ENCODE measurements at regions of chr17 and their contacts with region 1.

Region 1: DNA sequence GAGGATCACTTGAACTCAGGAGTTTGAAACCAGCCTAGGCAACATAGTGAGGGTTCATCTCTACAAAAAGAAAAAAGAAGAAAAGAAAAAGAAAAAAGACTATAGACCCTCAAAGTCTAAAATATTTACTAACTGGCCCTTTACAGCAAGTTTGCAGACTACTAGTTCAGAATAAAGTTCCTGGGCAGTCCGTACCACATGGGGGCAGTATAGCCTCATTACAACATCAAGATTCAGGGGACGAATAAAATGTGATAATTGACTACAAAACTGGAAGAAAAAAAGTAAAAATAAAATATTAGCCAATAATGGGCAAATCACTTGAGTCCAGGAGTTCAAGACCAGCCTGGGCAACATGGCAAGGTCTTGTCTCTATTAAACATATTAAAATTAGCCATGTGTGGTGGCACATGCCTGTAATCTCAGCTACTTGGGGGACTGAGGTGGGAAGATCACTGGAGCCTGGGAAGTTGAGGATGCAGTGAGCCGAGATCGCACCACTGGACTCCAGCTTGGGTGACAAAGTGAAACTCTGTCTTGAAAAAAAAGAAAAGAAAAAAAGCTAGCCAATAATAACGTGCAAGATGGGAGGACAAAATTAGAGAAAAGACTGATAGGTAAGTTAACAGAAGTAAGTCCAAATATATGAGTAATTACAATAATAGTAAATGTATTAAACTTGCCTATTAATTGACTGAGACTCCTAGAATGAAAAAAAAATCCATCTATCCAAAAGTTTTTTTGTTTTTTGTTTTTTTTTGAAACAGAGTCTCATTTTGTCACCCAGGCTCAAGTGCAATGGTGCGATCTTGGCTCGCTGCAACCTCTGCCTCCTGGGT is 129.4 kb upstream of the SEC14L1 start:
- DNase-seq: peak; percentile 85
- H3K4me3 ChIP-seq: no peak overlapping the region
- H3K27ac ChIP-seq: no peak overlapping the region
- H3K4me1 ChIP-seq: peaks cover 12% of the 10 kb centered on the region
- CTCF ChIP-seq: peak; percentile 100

Region 2: GRCh38 chr17:76868176-76868668 is 143.2 kb before region 1 on chr17 and contains the start of gene MGAT5B:
- CTCF ChIA-PET with region 1: no interaction called
- POLR2A ChIA-PET with region 1: no interaction called
- intact Hi-C with region 1: loop called (anchors 1 kb)
- DNase-seq: peak; percentile 94
- H3K4me3 ChIP-seq: peak within 1 kb of the TSS; percentile 58
- H3K27ac ChIP-seq: no peak within 1 kb of the TSS
- H3K4me1 ChIP-seq: peaks cover 21% of the 10 kb centered on the region
- CTCF ChIP-seq: peak; percentile 85
- total RNA-seq, gene MGAT5B: 1.3 and 2.5 TPM in 2 replicates

Region 3: DNA sequence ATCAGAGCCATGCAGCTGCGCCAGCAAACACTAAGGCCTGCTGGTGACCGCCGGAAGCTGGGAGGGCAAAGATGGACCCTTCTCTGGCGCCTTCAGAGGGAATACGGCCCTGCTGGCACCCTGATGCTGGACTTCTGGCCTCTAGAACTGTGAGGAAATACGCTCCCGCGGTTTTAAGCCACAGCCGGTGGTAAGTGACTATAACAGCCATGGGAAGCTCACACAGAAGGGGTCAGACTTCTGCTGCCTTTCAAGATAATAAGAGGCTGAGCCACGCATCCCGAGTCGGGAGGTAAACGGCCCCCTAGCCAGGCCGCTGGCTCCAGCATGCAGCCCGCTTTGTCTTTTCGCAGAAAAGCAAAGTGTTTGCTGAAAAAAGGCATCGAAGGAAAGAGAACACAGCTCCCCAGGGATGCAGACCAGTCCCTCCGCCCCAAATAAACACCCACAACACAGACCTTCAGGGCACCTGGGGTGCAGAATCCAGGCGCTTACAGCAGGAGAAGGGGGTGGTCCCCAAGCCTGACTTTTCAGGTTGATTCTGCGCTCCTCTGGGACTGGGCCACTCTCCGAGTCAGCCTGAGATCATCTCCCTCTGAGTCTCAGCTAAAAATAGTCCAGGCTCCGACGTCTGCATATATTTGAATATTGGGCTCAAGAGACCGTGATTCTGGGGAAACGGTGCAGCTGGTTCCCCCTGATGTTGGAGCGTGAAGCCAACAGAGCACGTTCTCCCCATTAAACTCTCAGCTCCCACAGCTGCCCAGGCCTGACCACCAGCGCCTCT is 53.5 kb before region 1 on chr17:
- CTCF ChIA-PET with region 1: interaction called, 5 read pairs
- POLR2A ChIA-PET with region 1: interaction called, 3 read pairs
- intact Hi-C with region 1: loop called (anchors 2 kb)
- DNase-seq: peak; percentile 89
- H3K4me3 ChIP-seq: peak overlapping the region; percentile 61
- H3K27ac ChIP-seq: peak overlapping the region; percentile 58
- H3K4me1 ChIP-seq: peaks cover 29% of the 10 kb centered on the region
- CTCF ChIP-seq: 0 out of 2 replicates have a peak, but pooled peaks have one; percentile 8

Region 4: DNA sequence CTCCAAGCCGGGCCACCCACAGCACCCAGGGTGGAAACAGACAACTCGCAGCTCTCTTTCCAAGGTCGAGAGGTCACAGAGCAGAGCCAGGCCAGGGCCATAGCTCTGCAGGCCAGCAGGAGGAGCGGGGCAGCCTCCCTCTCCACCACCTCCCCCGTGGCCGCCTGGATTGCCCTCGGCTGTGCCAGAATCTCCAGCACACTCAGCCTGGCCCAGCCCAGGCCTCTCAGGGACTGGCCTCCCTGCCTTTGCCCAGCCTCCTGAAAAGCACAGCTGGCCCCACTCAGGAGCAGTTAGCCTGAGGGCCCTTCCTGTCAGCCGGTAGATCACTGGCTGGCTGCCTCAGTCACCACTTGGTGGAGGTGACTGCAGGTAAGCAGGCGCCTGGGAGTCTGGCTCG is 43.5 kb after region 1 on chr17:
- CTCF ChIA-PET with region 1: no interaction called
- POLR2A ChIA-PET with region 1: interaction called, 5 read pairs
- intact Hi-C with region 1: loop called (anchors 1 kb)
- DNase-seq: no peak
- H3K4me3 ChIP-seq: no peak overlapping the region
- H3K27ac ChIP-seq: no peak overlapping the region
- H3K4me1 ChIP-seq: peaks cover 6% of the 10 kb centered on the region
- CTCF ChIP-seq: no peak

Region 5: GRCh38 chr17:77068915-77069314 is 57.5 kb after region 1 on chr17:
- CTCF ChIA-PET with region 1: no interaction called
- POLR2A ChIA-PET with region 1: no interaction called
- intact Hi-C with region 1: loop called (anchors 2 kb)
- DNase-seq: no peak
- H3K4me3 ChIP-seq: no peak overlapping the region
- H3K27ac ChIP-seq: no peak overlapping the region
- H3K4me1 ChIP-seq: no peaks in the 10 kb centered on the region
- CTCF ChIP-seq: no peak

Region 6: DNA sequence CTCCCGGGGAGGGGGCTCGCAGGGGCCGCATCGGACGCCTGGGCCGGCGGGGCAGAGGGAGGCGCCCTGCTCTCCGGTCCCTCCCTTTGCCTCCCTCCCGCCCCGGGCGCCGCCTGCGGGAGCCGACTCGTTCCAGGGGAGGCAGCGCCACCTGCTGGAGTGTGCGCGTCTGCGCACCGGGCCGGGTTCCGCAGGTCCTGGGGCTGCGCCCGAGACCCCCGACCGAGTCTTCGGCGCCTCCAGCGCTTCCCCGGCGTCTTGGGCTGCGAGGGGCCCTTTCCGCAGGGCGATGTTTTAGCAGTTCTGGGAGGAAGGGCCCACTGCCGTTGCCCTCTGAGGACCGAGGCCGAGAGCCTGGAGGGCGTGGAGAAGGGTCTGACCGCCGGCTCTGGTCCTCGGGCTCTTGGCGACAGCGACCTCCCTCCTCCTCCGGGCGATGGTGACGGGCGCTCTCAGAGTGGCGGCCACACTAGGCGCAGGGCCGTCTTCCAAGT is 235.7 kb after region 1 on chr17:
- CTCF ChIA-PET with region 1: no interaction called
- POLR2A ChIA-PET with region 1: no interaction called
- intact Hi-C with region 1: loop called (anchors 1 kb)
- DNase-seq: peak; percentile 91
- H3K4me3 ChIP-seq: peak overlapping the region; percentile 61
- H3K27ac ChIP-seq: no peak overlapping the region
- H3K4me1 ChIP-seq: peaks cover 14% of the 10 kb centered on the region
- CTCF ChIP-seq: peak; percentile 94

Measured in OCI-LY7 (cell line).